ENCODE measurements at regions of chr10 and their contacts with region 1.

Region 1: DNA sequence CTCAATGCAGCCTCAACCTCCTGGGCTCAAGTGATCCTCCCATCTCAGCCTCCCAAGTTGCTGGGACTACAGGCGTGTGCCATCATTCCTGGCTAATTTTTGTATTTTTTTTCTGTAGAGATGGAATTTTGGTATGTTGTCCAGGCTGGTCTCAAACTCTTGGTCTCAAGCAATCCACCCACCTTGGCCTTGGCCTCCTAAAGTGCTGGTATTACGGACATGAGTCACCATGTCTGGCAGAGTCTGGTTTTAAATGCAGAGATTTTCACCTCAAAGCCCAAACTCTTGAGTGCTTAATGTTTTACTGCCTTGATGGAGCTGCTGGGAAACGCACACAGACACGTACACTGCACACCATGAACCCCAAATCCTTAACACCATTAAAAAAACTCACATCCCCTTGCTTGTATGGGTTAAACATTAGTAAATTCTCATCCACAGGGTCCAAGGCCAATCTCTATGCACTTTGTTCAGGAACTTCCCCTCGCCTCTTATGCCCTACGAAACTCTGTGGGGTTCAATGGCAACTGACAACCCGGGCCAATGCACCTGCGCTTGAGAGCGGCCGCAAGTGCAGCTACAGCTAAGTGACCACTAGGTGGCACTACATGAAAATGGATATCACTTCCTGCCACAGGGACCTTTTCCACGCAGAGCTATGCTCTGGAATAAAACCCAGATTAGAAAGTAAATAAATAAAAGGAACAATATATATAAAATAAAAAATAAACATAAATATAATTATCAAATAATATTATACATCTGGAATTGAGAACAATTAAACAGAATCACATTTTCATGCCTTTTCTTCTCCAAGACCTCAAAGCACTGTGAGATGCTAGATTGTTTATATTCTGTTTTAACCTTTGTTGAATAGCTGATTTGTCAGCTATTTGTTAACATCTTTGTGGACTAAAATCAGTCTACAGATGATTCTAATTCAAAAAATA is 66.9 kb upstream of the AFAP1L2 start:
- DNase-seq: peak; percentile 75
- H3K4me3 Mint-ChIP-seq: no peak overlapping the region
- H3K27ac Mint-ChIP-seq: no peak overlapping the region
- H3K4me1 Mint-ChIP-seq: peaks cover 6% of the 10 kb centered on the region
- H3K27me3 Mint-ChIP-seq: no peaks in the 10 kb centered on the region
- CTCF ChIP-seq: peak; percentile 80

Region 2: GRCh38 chr10:114367041-114367818 is 104.0 kb before region 1 on chr10:
- CTCF ChIA-PET with region 1: no interaction called
- POLR2A ChIA-PET with region 1: no interaction called
- intact Hi-C with region 1: no loop called
- DNase-seq: no peak
- H3K4me3 Mint-ChIP-seq: no peak overlapping the region
- H3K27ac Mint-ChIP-seq: no peak overlapping the region
- H3K4me1 Mint-ChIP-seq: no peaks in the 10 kb centered on the region
- H3K27me3 Mint-ChIP-seq: no peaks in the 10 kb centered on the region
- CTCF ChIP-seq: no peak

Region 3: DNA sequence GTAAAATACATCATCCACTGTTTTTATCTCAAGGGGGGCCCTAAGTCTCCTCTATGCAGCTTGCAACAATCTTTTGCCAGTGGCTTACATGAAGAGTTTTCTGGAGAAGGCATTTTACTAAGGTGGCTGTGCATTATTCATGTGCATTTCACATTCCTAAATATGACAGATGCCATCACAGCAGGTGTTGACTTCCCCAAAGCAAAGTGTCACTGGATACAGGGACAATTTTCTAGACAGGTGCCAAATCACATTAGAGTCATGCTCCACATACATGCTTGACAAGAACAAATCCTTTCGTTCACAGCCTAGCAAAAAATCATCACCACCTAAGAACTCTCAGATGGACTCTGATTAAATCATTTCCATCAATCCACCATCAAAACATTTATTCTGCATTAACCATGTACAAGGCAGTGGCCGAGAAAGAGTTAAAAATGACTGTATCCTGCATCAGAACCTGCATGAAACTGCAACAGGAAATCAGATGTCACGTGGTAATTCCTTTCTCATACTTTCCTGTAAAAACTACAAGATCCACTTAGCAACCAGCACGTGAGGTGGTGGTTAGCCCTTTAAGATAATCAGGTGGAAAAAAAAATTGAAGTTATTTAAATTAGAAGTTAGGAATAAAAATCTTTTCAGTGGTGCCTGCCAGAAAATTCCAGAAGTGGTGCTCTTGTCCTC is 21.3 kb after region 1 on chr10:
- CTCF ChIA-PET with region 1: interaction called, 26 read pairs
- POLR2A ChIA-PET with region 1: interaction called, 4 read pairs
- intact Hi-C with region 1: no loop called
- DNase-seq: no peak
- H3K4me3 Mint-ChIP-seq: no peak overlapping the region
- H3K27ac Mint-ChIP-seq: no peak overlapping the region
- H3K4me1 Mint-ChIP-seq: peaks cover 25% of the 10 kb centered on the region
- H3K27me3 Mint-ChIP-seq: no peaks in the 10 kb centered on the region
- CTCF ChIP-seq: no peak

Region 4: GRCh38 chr10:114541081-114541796 is 70.0 kb after region 1 on chr10:
- CTCF ChIA-PET with region 1: interaction called, 31 read pairs
- POLR2A ChIA-PET with region 1: interaction called, 4 read pairs
- intact Hi-C with region 1: no loop called
- DNase-seq: peak; percentile 54
- H3K4me3 Mint-ChIP-seq: no peak overlapping the region
- H3K27ac Mint-ChIP-seq: peak overlapping the region; percentile 9
- H3K4me1 Mint-ChIP-seq: peaks cover 12% of the 10 kb centered on the region
- H3K27me3 Mint-ChIP-seq: no peaks in the 10 kb centered on the region
- CTCF ChIP-seq: no peak

Region 5: GRCh38 chr10:114631666-114632417 is 160.6 kb after region 1 on chr10:
- CTCF ChIA-PET with region 1: no interaction called
- POLR2A ChIA-PET with region 1: no interaction called
- intact Hi-C with region 1: no loop called
- DNase-seq: no peak
- H3K4me3 Mint-ChIP-seq: peak overlapping the region; percentile 73
- H3K27ac Mint-ChIP-seq: no peak overlapping the region
- H3K4me1 Mint-ChIP-seq: peaks cover 64% of the 10 kb centered on the region
- H3K27me3 Mint-ChIP-seq: no peaks in the 10 kb centered on the region
- CTCF ChIP-seq: no peak

Region 6: GRCh38 chr10:114876602-114877300 is 405.5 kb after region 1 on chr10:
- CTCF ChIA-PET with region 1: interaction called, 8 read pairs
- POLR2A ChIA-PET with region 1: no interaction called
- intact Hi-C with region 1: loop called (anchors 1 kb)
- DNase-seq: peak; percentile 86
- H3K4me3 Mint-ChIP-seq: peak overlapping the region; percentile 53
- H3K27ac Mint-ChIP-seq: peak overlapping the region; percentile 89
- H3K4me1 Mint-ChIP-seq: peaks cover 18% of the 10 kb centered on the region
- H3K27me3 Mint-ChIP-seq: no peaks in the 10 kb centered on the region
- CTCF ChIP-seq: peak; percentile 90

Measured in MCF 10A (cell line).